ENCODE measurements at regions of chr12 and their contacts with region 1.

Region 1: GRCh38 chr12:57016318-57016717 is at the start of gene TAC3:
- DNase-seq: no peak
- ATAC-seq: peak; percentile 46; the same call in 1 of the 2 replicates
- H3K4me3 ChIP-seq: no peak within 1 kb of the TSS
- H3K27ac ChIP-seq: no peak within 1 kb of the TSS
- H3K4me1 ChIP-seq: no peaks in the 10 kb centered on the region
- H3K27me3 ChIP-seq: peaks cover 14% of the 10 kb centered on the region
- CTCF ChIP-seq: no peak
- total RNA-seq, gene TAC3: not detected

Region 2: GRCh38 chr12:56785141-56785865 is 231.0 kb before region 1 on chr12:
- CTCF ChIA-PET with region 1: no interaction called
- POLR2A ChIA-PET with region 1: no interaction called
- in situ Hi-C with region 1: no loop called
- intact Hi-C with region 1: no loop called
- DNase-seq: no peak
- ATAC-seq: no peak
- H3K4me3 ChIP-seq: no peak overlapping the region
- H3K27ac ChIP-seq: no peak overlapping the region
- H3K4me1 ChIP-seq: no peaks in the 10 kb centered on the region
- H3K27me3 ChIP-seq: no peaks in the 10 kb centered on the region
- CTCF ChIP-seq: no peak

Region 3: DNA sequence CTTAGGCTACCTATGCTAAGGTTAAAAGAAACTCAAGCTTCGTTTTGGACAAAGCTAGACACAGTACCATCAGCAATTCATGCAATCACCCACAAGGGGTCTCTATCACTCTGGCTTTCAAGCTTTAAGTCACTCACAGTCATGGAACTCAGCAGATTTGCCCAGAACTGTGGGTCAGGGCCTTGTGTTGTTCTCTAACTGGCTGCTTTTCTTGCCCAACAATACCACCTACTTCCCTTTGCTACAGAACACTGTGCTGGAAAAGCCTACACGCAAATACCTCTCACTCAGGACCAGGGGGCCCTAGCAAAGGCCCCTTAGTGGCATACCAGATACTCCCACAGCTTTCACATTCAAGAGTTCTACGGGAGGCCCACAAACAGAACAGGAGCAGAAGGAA is 53.2 kb after region 1 on chr12:
- CTCF ChIA-PET with region 1: no interaction called
- POLR2A ChIA-PET with region 1: interaction called, 17 read pairs
- in situ Hi-C with region 1: no loop called
- intact Hi-C with region 1: no loop called
- DNase-seq: peak; percentile 75
- ATAC-seq: peak; percentile 98
- H3K4me3 ChIP-seq: no peak overlapping the region
- H3K27ac ChIP-seq: 0 out of 2 replicates have a peak overlapping the region, but pooled peaks have one; percentile 25
- H3K4me1 ChIP-seq: no peaks in the 10 kb centered on the region
- H3K27me3 ChIP-seq: no peaks in the 10 kb centered on the region
- CTCF ChIP-seq: peak; percentile 85

Region 4: DNA sequence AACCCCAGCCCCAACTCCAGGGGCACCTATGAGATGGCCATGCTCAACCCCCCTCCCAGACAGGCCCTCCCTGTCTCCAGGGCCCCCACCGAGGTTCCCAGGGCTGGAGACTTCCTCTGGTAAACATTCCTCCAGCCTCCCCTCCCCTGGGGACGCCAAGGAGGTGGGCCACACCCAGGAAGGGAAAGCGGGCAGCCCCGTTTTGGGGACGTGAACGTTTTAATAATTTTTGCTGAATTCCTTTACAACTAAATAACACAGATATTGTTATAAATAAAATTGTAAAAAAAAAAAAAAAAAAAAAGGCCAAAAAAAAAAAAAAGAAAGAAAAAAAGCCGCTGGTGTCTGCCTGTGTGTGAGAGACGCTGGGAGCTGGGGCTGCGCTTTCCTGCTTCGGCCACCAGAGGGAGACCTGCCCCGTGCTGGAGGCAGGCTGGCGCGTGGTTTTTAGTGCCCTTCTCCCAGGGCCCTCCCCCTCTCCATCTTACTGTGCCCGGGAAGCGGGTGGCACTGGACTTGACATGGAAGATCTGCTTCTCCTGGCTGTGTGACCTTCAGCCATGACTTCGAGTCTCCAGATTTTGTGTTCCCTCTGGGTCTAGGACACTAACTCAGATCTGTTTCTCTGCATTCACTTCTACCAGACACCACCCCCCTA is 196.9 kb after region 1 on chr12:
- CTCF ChIA-PET with region 1: no interaction called
- POLR2A ChIA-PET with region 1: no interaction called
- in situ Hi-C with region 1: no loop called
- intact Hi-C with region 1: no loop called
- DNase-seq: peak; percentile 61
- ATAC-seq: peak; percentile 62
- H3K4me3 ChIP-seq: no peak overlapping the region
- H3K27ac ChIP-seq: no peak overlapping the region
- H3K4me1 ChIP-seq: peaks cover 20% of the 10 kb centered on the region
- H3K27me3 ChIP-seq: peaks cover 10% of the 10 kb centered on the region
- CTCF ChIP-seq: peak; percentile 97

Region 5: DNA sequence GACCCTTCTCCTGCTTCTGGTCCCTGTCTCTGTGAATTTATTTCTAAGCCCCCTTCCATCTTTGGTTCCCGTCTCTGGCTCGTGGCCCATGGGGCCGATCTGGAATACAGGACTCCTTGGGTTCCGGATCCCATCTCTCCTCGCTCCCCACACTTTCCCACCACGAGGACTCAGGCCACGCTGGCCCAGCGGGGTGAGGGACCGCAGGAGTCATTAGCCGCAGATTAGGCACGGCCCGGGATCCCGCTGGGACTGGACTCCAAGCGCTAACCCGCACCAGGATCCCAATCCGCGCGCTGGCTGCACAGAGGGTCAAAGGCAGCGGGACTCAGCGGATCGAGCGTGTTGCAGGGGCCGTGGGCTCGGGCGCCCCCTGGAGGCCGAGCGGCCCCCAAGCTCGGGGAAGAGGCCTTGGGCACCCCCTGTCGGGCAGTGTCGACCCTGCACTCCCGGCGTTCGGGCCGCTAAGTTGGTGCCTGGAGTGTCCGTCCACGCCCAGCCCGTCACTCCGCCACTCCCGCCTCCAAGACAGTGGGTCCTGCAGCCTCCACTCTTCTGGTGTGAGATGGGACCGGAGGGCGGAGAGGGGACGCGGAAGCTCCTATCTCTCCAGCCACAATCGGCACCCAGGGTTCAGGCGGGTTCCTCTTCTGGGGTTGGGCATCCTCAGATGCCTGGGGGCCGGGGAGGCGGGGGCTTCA is 222.7 kb after region 1 on chr12:
- CTCF ChIA-PET with region 1: no interaction called
- POLR2A ChIA-PET with region 1: no interaction called
- in situ Hi-C with region 1: no loop called
- intact Hi-C with region 1: no loop called
- DNase-seq: peak; percentile 63
- ATAC-seq: peak; percentile 73
- H3K4me3 ChIP-seq: peak overlapping the region; percentile 56 to 67
- H3K27ac ChIP-seq: no peak overlapping the region; the same call in 1 of the 2 replicates
- H3K4me1 ChIP-seq: peaks cover 21% of the 10 kb centered on the region
- H3K27me3 ChIP-seq: peaks cover 2% of the 10 kb centered on the region; the same call in 1 of the 2 replicates
- CTCF ChIP-seq: peak; percentile 100